Pancreas (tissue), 10 donors: ENCODE measurements at regions of chr11 and their contacts with region 1.

Region 1: GRCh38 chr11:19379465-19379864 is 138.7 kb upstream of the E2F8 start:
- DNase-seq: no peak
- ATAC-seq: no peak
- H3K4me3 ChIP-seq: no peak overlapping the region
- H3K27ac ChIP-seq: no peak overlapping the region
- H3K4me1 ChIP-seq: no peaks in the 10 kb centered on the region
- H3K27me3 ChIP-seq: no peaks in the 10 kb centered on the region
- CTCF ChIP-seq: no peak

Region 2: GRCh38 chr11:19218786-19219460 is 160.5 kb before region 1 on chr11:
- intact Hi-C with region 1: no loop called
- DNase-seq: no peak
- ATAC-seq: no peak
- H3K4me3 ChIP-seq: no peak overlapping the region
- H3K27ac ChIP-seq: no peak overlapping the region
- H3K4me1 ChIP-seq: peaks cover 0 to 5% (median 0%) of the 10 kb centered on the region in 3 donors
- H3K27me3 ChIP-seq: peaks cover 0 to 5% (median 0%) of the 10 kb centered on the region in 4 donors
- CTCF ChIP-seq: no peak

Region 3: GRCh38 chr11:19546325-19546724 is 166.9 kb after region 1 on chr11:
- intact Hi-C with region 1: loop called in 1 of 3 experiments (anchors 5 kb)
- DNase-seq: no peak
- ATAC-seq: no peak
- H3K4me3 ChIP-seq: no peak overlapping the region
- H3K27ac ChIP-seq: no peak overlapping the region
- H3K4me1 ChIP-seq: no peaks in the 10 kb centered on the region
- H3K27me3 ChIP-seq: no peaks in the 10 kb centered on the region
- CTCF ChIP-seq: no peak